ENCODE measurements at regions of chr3 and their contacts with region 1.

Region 1: DNA sequence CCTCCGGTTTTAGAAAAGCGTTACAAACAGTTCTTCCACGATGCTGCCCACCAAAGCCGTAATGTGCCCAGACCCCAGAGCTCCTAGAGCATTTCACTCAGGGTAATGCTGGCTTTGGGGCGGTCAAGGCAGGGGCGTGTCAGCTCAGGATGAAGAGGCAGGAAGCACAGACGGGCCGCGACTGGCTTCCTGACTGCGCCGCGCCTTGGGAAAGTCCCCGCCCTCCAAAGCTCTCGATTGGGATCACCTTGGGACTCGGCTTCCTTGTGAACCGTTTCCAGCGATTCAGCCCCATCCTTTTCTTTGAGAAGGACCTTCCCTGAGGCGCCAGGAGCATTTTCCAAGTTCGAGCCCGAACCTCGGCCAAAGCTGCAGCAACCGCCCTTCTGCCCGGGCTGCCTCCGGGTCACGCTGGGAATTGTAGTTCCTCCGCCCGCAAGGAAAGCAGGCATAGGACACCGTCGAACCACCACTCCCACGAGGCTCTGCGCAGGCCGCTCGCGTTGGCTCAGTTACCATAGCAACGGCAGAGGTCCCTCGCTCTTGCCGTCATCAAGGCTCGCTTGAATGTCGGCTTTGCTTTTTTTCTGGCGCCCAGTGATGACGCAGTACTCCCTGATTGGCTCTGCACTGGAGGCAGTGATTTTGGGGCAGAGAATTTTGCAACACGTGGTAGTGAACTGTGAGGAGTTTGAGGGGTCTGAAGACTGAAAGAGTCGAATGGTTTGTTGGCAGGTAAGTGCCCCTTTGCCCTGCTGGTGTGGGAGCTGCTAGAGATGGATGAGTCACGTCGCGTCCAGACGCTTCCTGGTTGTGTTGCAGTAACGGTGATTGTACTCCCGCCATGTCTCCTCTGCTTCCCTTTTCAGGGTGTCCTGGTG is at the starts of genes CCDC191 and QTRT2:
- DNase-seq: peak; percentile 98 to 99 (median 99)
- ATAC-seq: peak; percentile 99 to 100 (median 100)
- H3K4me3 ChIP-seq: peak within 1 kb of the TSS; percentile 46 to 92 (median 75)
- H3K27ac ChIP-seq: peak within 1 kb of the TSS in 11 of 12 donors; percentile 74 to 88 (median 82)
- H3K4me1 ChIP-seq: peaks cover 0 to 28% (median 15%) of the 10 kb centered on the region in 12 donors
- H3K27me3 ChIP-seq: no peaks in the 10 kb centered on the region
- CTCF ChIP-seq: peak in 1 of 12 donors; percentile 6
- POLR2A ChIP-seq: peak in 1 of 2 donors; percentile 39
- total RNA-seq, gene CCDC191: 0.38 to 3.2 (median 1.2) TPM
- total RNA-seq, gene QTRT2: 2.7 to 12.2 (median 5.7) TPM

Region 2: GRCh38 chr3:113736548-113737089 is 319.8 kb before region 1 on chr3:
- intact Hi-C with region 1: loop called in 4 of 10 experiments (anchors 5 to 10 kb)
- DNase-seq: no peak
- ATAC-seq: peak; percentile 53 to 76 (median 63)
- H3K4me3 ChIP-seq: no peak overlapping the region
- H3K27ac ChIP-seq: peak overlapping the region in 1 of 12 donors; percentile 15
- H3K4me1 ChIP-seq: peaks cover 0 to 39% (median 16%) of the 10 kb centered on the region in 12 donors
- H3K27me3 ChIP-seq: no peaks in the 10 kb centered on the region
- CTCF ChIP-seq: peak; percentile 40 to 80 (median 68)
- POLR2A ChIP-seq: no peak

Region 3: GRCh38 chr3:113844622-113845222 is 211.6 kb before region 1 on chr3:
- intact Hi-C with region 1: loop called in 3 of 10 experiments (anchors 10 kb)
- DNase-seq: no peak
- ATAC-seq: no peak
- H3K4me3 ChIP-seq: no peak overlapping the region
- H3K27ac ChIP-seq: no peak overlapping the region
- H3K4me1 ChIP-seq: no peaks in the 10 kb centered on the region
- H3K27me3 ChIP-seq: no peaks in the 10 kb centered on the region
- CTCF ChIP-seq: peak; percentile 32 to 70 (median 48)
- POLR2A ChIP-seq: no peak

Region 4: DNA sequence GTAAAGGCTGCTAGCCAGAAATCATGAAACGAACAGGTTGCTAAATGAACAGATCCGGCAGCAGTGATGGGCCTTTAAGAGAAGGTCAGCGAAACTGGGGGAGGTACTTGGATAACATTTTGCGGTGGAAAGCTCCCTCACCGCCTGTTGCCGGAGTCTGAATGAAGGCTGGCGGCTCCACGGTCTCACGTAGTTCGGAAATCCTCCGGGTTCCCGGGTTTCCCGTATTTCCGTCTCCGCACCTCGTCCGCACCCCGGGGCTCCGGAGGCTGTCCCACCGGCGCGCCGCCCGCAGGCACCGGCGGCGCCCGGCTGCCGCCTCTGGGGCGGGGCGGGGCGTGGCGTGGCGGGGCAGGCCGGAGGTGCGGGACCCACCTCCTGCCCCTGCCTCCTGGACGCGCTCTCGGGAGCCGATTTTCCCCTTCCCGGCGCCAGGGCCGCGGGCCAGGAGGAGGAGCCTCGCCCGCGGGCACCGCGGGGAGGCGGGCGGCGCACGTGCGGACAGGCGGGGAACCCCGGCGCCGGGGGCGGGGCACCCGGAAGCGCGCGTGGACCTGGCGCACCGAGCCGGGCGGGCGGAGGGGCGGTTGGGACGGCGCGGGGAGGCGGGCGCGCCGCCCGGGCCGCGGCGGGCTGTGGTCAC is 108.9 kb before region 1 on chr3 and contains the start of gene ZDHHC23:
- intact Hi-C with region 1: loop called in 1 of 10 experiments (anchors 5 kb)
- DNase-seq: peak; percentile 59 to 85 (median 70)
- ATAC-seq: peak; percentile 68 to 97 (median 85)
- H3K4me3 ChIP-seq: peak within 1 kb of the TSS; percentile 45 to 85 (median 70)
- H3K27ac ChIP-seq: peak within 1 kb of the TSS in 3 of 12 donors; percentile 20 to 51 (median 33)
- H3K4me1 ChIP-seq: peaks cover 0 to 16% (median 6%) of the 10 kb centered on the region in 12 donors
- H3K27me3 ChIP-seq: peaks cover 0 to 3% (median 0%) of the 10 kb centered on the region in 9 donors
- CTCF ChIP-seq: no peak
- POLR2A ChIP-seq: no peak
- total RNA-seq, gene ZDHHC23: 0.60 to 4.2 (median 1.7) TPM

Region 5: DNA sequence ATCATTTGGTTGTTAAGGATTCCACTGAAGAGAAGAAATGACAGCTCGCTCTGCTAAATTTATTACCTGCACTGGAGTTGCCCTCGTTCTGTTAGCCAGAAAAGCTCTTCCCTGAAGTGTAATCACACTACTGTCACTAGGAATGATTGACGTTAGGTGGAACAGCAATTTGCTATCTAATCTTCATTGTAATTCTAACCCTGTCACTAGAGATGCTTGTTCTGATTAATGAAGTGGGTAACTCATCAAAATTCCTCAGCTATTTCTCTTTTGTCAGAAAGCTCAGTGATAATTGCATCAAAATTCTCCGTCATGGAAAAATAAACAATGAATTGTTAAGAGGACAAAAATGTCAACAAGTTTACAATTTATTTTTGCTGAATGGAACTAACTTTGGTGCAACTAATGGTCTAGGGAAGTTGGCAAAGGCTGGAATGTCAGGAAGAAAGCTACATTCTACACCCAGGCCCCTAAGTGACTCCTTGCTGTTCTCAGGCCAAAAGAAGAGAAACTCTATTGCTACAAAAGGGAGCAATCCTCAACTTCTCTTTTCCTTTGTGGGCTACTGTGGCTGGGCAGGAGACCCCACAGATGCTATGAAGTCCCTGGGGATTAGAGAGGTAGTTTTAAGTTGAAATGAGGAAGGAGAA is 34.1 kb before region 1 on chr3:
- intact Hi-C with region 1: no loop called
- DNase-seq: no peak
- ATAC-seq: no peak
- H3K4me3 ChIP-seq: no peak overlapping the region
- H3K27ac ChIP-seq: no peak overlapping the region
- H3K4me1 ChIP-seq: no peaks in the 10 kb centered on the region
- H3K27me3 ChIP-seq: no peaks in the 10 kb centered on the region
- CTCF ChIP-seq: no peak
- POLR2A ChIP-seq: no peak

Region 6: GRCh38 chr3:114122027-114122709 is 65.8 kb after region 1 on chr3:
- intact Hi-C with region 1: loop called in 1 of 10 experiments (anchors 2 kb)
- DNase-seq: peak in 2 of 5 donors; percentile 30 to 50
- ATAC-seq: peak; percentile 74 to 97 (median 83)
- H3K4me3 ChIP-seq: no peak overlapping the region
- H3K27ac ChIP-seq: peak overlapping the region; percentile 27 to 84 (median 62)
- H3K4me1 ChIP-seq: peaks cover 0 to 22% (median 7%) of the 10 kb centered on the region in 12 donors
- H3K27me3 ChIP-seq: no peaks in the 10 kb centered on the region
- CTCF ChIP-seq: no peak
- POLR2A ChIP-seq: no peak

Region 7: GRCh38 chr3:114290911-114291901 is 234.8 kb after region 1 on chr3:
- intact Hi-C with region 1: no loop called
- DNase-seq: peak; percentile 41 to 85 (median 42)
- ATAC-seq: peak in 3 of 4 donors; percentile 42 to 60 (median 59)
- H3K4me3 ChIP-seq: peak overlapping the region in 1 of 12 donors; percentile 19
- H3K27ac ChIP-seq: peak overlapping the region in 1 of 12 donors; percentile 68
- H3K4me1 ChIP-seq: peaks cover 0 to 6% (median 0%) of the 10 kb centered on the region in 12 donors
- H3K27me3 ChIP-seq: no peaks in the 10 kb centered on the region
- CTCF ChIP-seq: peak; percentile 52 to 83 (median 66)
- POLR2A ChIP-seq: no peak